ENCODE measurements at regions of chr14 and their contacts with region 1.

Region 1: DNA sequence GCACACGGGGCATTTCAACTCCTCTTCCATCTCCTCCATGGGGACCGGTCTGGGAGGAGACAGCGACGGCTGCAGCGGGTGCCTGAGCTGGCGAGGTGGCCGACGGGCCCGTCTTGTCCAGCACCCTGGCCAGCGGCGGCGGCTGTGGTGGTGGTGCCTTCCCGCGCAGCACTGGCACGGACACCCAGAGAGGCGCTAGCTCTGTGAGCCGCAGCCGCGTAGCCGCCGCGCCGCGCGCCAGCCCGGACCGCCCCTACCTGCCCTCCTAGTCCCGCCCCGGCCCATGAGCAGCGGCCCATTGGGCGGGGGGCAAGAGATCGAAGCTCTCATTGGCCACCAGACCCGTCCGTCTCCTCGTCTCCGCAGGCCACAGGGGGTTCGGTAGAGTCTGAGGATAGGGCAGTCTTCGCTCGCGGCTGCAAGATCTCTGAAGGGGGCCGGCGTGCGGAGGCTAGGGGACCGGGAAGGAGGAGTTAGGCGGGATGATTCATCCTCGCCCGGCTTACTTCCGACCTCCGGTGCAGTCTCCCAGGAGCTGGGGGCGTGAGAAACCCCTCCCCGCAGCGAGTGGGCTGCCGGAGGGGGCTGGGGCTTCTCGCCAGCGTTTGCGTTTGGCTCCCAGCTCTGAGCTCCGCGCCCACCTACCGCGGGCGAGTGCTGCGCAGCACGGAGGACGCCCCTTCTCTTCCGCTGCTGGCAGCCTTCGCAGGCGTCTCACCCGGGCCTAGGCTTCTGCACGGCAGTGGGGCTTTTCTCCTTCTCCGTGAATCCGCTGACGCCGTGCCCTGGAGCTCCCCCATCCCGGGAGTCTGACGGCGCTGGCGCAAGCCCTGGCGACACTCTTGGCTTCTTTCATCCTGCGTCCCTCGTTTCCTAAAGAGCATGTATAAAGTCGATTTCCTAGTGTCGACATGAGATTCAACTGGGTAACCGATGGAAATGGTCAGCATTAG is at the start of gene TRIM9:
- DNase-seq: peak; percentile 95
- ATAC-seq: peak; percentile 97
- H3K4me3 ChIP-seq: peak within 1 kb of the TSS; percentile 58 to 83 (median 80)
- H3K4me3 Mint-ChIP-seq: peak within 1 kb of the TSS; percentile 95
- H3K27ac ChIP-seq: no peak within 1 kb of the TSS
- H3K27ac Mint-ChIP-seq: peak within 1 kb of the TSS; percentile 75
- H3K4me1 ChIP-seq: peaks cover 21 to 24% of the 10 kb centered on the region in 2 donors
- H3K4me1 Mint-ChIP-seq: peaks cover 23% of the 10 kb centered on the region
- H3K27me3 ChIP-seq: peaks cover 0 to 33% (median 16%) of the 10 kb centered on the region in 4 experiments
- H3K27me3 Mint-ChIP-seq: peaks cover 37% of the 10 kb centered on the region
- CTCF ChIP-seq: no peak
- total RNA-seq, gene TRIM9: 0.32 TPM in 2 replicates

Region 2: GRCh38 chr14:51020024-51020710 is 75.0 kb before region 1 on chr14:
- CTCF ChIA-PET with region 1: no interaction called
- POLR2A ChIA-PET with region 1: no interaction called
- intact Hi-C with region 1: no loop called
- DNase-seq: no peak
- ATAC-seq: no peak
- H3K4me3 ChIP-seq: no peak overlapping the region
- H3K4me3 Mint-ChIP-seq: no peak overlapping the region
- H3K27ac ChIP-seq: no peak overlapping the region
- H3K27ac Mint-ChIP-seq: no peak overlapping the region
- H3K4me1 ChIP-seq: no peaks in the 10 kb centered on the region
- H3K4me1 Mint-ChIP-seq: no peaks in the 10 kb centered on the region
- H3K27me3 ChIP-seq: no peaks in the 10 kb centered on the region
- H3K27me3 Mint-ChIP-seq: no peaks in the 10 kb centered on the region
- CTCF ChIP-seq: no peak

Region 3: DNA sequence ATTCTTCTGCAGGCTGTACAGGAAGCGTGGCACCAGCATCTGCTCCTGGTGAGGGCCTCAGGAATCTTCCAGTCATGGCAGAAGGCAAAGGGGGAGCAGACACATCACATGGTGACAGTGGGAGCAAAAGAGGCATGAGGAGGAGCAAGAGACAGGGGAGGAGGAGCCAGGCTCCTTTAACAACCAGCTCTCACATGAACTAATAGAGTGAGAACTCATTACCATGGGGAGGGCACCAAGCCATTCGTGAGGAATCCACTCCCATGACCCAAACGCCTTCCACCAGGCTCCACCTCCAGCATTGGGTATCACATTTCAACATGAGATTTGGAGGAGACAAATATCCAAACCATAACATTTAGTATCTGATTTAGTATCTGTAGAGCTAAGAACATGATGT is 14.5 kb after region 1 on chr14:
- CTCF ChIA-PET with region 1: no interaction called
- POLR2A ChIA-PET with region 1: no interaction called
- intact Hi-C with region 1: no loop called
- DNase-seq: no peak
- ATAC-seq: no peak
- H3K4me3 ChIP-seq: no peak overlapping the region
- H3K4me3 Mint-ChIP-seq: no peak overlapping the region
- H3K27ac ChIP-seq: no peak overlapping the region
- H3K27ac Mint-ChIP-seq: no peak overlapping the region
- H3K4me1 ChIP-seq: peaks cover 0 to 4% of the 10 kb centered on the region in 2 donors
- H3K4me1 Mint-ChIP-seq: peaks cover 3% of the 10 kb centered on the region
- H3K27me3 ChIP-seq: peaks cover 0 to 4% (median 0%) of the 10 kb centered on the region in 4 experiments
- H3K27me3 Mint-ChIP-seq: peaks cover 13% of the 10 kb centered on the region
- CTCF ChIP-seq: no peak

Region 4: DNA sequence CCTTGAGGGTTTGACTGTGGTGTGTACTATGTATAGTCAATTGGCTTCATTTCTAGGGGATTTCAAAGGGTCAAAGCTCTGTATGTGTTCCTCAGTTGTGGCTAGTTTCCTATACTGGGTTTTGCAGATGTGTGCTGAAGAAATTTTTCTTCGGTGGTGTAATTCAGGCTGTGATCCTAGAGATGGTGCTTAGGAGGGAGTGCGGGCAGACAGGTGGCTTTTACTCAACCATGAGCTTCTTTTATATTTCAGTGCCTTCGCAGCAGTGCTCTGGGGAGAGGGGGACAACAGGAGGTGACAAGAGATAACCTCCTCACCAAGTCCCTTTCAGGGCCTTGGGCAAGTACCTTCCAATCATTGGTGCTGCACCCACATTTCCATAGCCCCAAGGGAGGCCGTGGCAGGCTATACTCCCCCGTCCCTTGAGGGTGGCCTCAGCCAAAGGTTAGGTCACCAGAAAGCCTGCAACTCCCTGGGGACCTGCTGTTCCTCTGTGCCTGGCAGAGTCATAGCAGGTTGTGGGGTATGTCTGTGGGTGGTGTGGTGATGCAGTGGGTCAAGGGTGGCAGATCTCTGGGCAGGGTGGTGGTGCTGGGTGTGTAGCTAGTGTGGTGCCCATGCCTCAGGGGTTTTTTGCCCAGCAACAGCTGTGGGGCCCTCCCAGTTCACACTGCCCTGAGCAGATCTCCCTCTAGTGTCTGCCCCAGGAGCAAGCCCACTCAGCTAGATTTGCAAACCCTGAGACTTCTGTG is 107.9 kb after region 1 on chr14:
- CTCF ChIA-PET with region 1: interaction called, 6 read pairs
- POLR2A ChIA-PET with region 1: no interaction called
- intact Hi-C with region 1: loop called (anchors 1 kb)
- DNase-seq: peak; percentile 57
- ATAC-seq: peak; percentile 86
- H3K4me3 ChIP-seq: no peak overlapping the region
- H3K4me3 Mint-ChIP-seq: peak overlapping the region; percentile 64
- H3K27ac ChIP-seq: no peak overlapping the region
- H3K27ac Mint-ChIP-seq: peak overlapping the region; percentile 71
- H3K4me1 ChIP-seq: peaks cover 29 to 30% of the 10 kb centered on the region in 2 donors
- H3K4me1 Mint-ChIP-seq: peaks cover 33% of the 10 kb centered on the region
- H3K27me3 ChIP-seq: peaks cover 0 to 5% (median 1%) of the 10 kb centered on the region in 4 experiments
- H3K27me3 Mint-ChIP-seq: peaks cover 12% of the 10 kb centered on the region
- CTCF ChIP-seq: no peak

Region 5: DNA sequence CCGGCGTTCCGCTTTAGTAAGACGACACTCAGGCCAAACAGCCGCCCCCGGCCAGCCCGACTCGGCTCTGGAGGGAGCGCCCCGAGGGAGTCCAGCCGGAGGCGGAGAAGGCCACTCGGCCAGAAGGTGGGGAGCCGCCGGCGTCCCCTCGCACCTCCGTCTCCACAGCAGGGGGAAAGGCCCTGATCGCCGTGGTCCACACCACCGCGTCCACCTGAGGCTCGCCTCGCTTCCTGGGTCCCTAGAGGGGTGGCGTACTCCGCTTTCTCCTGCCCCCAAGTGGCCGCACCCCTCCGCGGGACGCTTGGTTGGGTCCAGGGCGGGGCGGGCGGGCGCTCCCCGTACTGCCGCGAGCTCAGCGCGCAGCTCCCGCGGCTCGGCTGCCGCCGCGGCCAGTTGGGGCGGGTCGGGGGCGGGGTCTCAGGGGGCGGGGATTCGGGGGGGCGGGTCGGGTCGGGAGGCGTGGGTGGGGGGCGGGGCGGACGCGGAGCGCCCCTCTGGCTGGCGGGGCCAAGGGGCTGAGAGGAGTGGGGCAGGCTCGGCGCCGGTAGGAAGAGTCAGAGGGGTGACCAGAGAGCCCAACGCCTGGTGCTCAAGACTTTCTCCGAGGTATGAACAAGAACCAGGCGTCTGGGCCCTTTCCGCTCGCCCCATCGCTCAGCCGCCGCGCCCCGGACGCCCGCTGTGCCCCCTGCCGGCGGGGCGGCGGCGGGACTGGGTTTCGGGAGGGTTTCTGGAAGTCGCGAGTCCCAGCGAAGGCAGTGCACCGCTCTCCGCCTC is 556.4 kb after region 1 on chr14 and contains the start of gene FRMD6:
- CTCF ChIA-PET with region 1: no interaction called
- POLR2A ChIA-PET with region 1: no interaction called
- intact Hi-C with region 1: loop called (anchors 10 kb)
- DNase-seq: peak; percentile 90
- ATAC-seq: peak; percentile 80
- H3K4me3 ChIP-seq: peak within 1 kb of the TSS; percentile 34 to 85 (median 69)
- H3K4me3 Mint-ChIP-seq: peak within 1 kb of the TSS; percentile 85
- H3K27ac ChIP-seq: no peak within 1 kb of the TSS
- H3K27ac Mint-ChIP-seq: peak within 1 kb of the TSS; percentile 56
- H3K4me1 ChIP-seq: peaks cover 19 to 25% of the 10 kb centered on the region in 2 donors
- H3K4me1 Mint-ChIP-seq: peaks cover 12% of the 10 kb centered on the region
- H3K27me3 ChIP-seq: peaks cover 0 to 37% (median 34%) of the 10 kb centered on the region in 4 experiments
- H3K27me3 Mint-ChIP-seq: peaks cover 41% of the 10 kb centered on the region
- CTCF ChIP-seq: peak; percentile 75
- total RNA-seq, gene FRMD6: 0.17 and 0.30 TPM in 2 replicates

Region 6: DNA sequence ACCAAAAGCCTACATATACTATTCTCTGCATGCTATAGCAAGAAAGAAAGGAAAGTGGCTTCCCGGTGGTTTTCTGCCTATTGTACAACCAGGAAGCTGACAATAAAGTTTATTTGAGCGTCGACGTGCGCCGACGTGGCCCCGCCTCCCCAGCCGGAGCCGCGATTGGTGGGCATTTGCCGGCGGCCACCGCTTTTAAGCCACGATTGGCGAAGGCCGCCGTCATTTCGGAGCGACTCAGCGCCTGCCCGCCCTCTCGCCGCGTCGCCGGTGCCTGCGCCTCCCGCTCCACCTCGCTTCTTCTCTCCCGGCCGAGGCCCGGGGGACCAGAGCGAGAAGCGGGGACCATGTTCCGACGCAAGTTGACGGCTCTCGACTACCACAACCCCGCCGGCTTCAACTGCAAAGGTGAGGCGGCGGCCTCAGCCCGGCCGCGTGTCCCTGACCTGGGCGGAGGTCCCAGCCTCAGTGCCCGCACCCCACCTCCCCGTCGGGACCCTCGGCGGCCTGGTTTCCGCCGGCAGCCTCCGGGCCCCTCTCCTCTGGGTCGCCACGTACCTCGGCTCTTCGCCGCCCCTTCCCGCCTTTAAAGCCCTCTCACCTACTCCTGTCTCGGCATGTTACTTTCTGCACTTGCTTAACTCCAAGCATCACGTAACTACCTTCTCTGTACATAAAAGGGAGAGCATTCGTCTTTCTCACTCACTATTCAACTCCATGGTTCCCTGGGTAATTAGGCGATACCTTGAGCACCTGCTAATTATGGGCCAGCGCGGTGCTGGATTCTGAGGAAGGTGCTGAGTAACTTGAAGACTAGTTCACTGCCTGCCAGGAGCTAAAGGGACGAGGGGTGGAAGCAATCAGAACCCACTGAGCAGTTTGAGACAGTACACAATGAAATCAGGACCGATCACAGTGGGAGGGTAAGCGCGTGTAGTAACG is 894.4 kb after region 1 on chr14 and contains the start of gene RTRAF:
- CTCF ChIA-PET with region 1: no interaction called
- POLR2A ChIA-PET with region 1: no interaction called
- intact Hi-C with region 1: loop called (anchors 10 kb)
- DNase-seq: peak; percentile 95
- ATAC-seq: peak; percentile 96
- H3K4me3 ChIP-seq: peak within 1 kb of the TSS; percentile 72 to 94 (median 77)
- H3K4me3 Mint-ChIP-seq: peak within 1 kb of the TSS; percentile 98
- H3K27ac ChIP-seq: peak within 1 kb of the TSS; percentile 67 to 95
- H3K27ac Mint-ChIP-seq: peak within 1 kb of the TSS; percentile 91
- H3K4me1 ChIP-seq: peaks cover 15 to 24% of the 10 kb centered on the region in 2 donors
- H3K4me1 Mint-ChIP-seq: peaks cover 34% of the 10 kb centered on the region
- H3K27me3 ChIP-seq: no peaks in the 10 kb centered on the region
- H3K27me3 Mint-ChIP-seq: no peaks in the 10 kb centered on the region
- CTCF ChIP-seq: no peak
- total RNA-seq, gene RTRAF: 91.1 and 94.2 TPM in 2 replicates

Region 7: GRCh38 chr14:52729925-52730667 is 1634.9 kb after region 1 on chr14 and contains the start of gene STYX:
- CTCF ChIA-PET with region 1: no interaction called
- POLR2A ChIA-PET with region 1: no interaction called
- intact Hi-C with region 1: loop called (anchors 2 kb)
- DNase-seq: peak; percentile 98
- ATAC-seq: peak; percentile 96
- H3K4me3 ChIP-seq: peak within 1 kb of the TSS; percentile 75 to 99 (median 84)
- H3K4me3 Mint-ChIP-seq: peak within 1 kb of the TSS; percentile 93
- H3K27ac ChIP-seq: peak within 1 kb of the TSS; percentile 73 to 87
- H3K27ac Mint-ChIP-seq: peak within 1 kb of the TSS; percentile 93
- H3K4me1 ChIP-seq: peaks cover 14 to 16% of the 10 kb centered on the region in 2 donors
- H3K4me1 Mint-ChIP-seq: peaks cover 41% of the 10 kb centered on the region
- H3K27me3 ChIP-seq: no peaks in the 10 kb centered on the region
- H3K27me3 Mint-ChIP-seq: no peaks in the 10 kb centered on the region
- CTCF ChIP-seq: no peak
- total RNA-seq, gene STYX: 15.5 and 15.7 TPM in 2 replicates